ENCODE measurements at regions of chr2 and their contacts with region 1.

Region 1: DNA sequence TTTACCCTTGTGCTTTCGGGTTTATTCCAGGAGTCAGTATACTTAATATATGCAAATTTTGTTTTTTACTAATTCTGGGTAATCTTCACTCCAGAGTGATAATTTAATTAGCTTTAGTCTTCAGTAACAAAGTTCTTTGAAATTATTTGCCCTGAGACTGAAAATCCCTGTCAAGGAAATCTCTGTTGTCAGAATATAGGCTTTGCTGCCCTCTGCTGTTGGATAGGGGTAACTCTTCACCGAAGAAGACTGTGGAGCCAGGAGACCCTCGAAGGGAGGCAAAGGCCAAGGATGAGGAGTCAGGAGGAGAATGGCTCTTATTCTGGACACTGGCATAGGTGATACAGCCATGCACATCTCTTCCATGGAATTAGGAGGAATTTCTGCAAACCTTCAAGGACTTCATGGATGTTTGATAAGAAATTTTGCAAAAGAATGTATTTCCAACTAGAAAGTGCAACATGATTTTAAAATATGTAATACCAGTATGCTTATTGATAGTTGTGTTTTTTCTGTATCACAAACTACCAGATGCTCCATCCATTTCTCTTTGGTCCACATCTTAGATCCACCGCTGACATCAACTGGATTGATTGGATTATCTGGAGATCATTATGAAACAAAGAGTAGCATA is 182.3 kb downstream of the RDH14 start:
- DNase-seq: peak in 2 of 3 donors; percentile 5 to 7
- H3K4me3 ChIP-seq: no peak overlapping the region
- H3K4me3 Mint-ChIP-seq: no peak overlapping the region
- H3K27ac ChIP-seq: no peak overlapping the region
- H3K27ac Mint-ChIP-seq: no peak overlapping the region
- H3K4me1 ChIP-seq: no peaks in the 10 kb centered on the region
- H3K4me1 Mint-ChIP-seq: no peaks in the 10 kb centered on the region
- H3K27me3 ChIP-seq: peaks cover 0 to 2% of the 10 kb centered on the region in 2 donors
- H3K27me3 Mint-ChIP-seq: peaks cover 4 to 8% (median 6%) of the 10 kb centered on the region in 3 donors
- CTCF ChIP-seq: peak; percentile 75

Region 2: DNA sequence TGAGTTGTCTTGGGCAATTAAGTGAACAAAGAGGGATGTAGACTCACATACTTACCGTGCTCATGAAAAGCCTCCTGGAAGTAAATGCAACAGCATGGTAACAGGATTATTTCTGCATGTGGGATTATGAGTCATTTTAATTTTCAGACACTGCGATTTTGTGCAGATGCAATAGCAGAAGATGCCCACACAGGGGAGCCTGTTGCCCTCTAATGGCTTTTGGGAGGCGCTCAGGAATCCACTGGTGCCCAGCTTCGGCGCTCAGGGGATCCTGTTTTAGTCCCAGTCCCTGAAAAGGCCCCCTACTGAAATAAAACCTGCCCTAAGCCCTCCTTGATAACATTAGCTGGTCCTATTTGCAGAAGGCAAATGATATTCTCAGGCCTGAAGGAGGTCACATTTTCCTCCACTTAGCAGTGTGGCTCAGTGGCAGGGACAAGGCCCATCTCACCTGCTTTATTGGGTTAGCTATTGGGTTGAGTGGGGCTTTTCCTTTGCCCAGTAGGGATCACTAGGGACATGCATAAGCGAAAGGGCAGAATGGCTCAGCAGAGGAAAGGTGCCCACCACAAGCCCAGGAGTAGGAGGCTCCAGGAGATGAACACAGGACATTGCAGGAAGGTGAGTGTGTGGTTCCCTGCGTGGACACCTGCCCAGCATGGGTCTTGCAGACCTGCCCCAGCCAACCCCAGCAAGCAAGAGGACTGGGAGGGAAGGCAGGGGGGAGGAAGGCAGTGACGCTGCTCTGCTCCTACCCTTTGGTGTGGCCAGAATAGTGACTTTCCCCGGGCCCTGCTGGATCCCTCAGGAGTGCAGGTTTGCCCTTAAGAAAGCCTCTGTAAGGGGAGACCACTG is 526.2 kb before region 1 on chr2:
- intact Hi-C with region 1: loop called in 1 of 2 experiments (anchors 5 kb)
- DNase-seq: peak; percentile 1 to 12 (median 8)
- H3K4me3 ChIP-seq: no peak overlapping the region
- H3K4me3 Mint-ChIP-seq: no peak overlapping the region
- H3K27ac ChIP-seq: no peak overlapping the region
- H3K27ac Mint-ChIP-seq: no peak overlapping the region
- H3K4me1 ChIP-seq: no peaks in the 10 kb centered on the region
- H3K4me1 Mint-ChIP-seq: no peaks in the 10 kb centered on the region
- H3K27me3 ChIP-seq: peaks cover 0 to under 1% of the 10 kb centered on the region in 2 donors
- H3K27me3 Mint-ChIP-seq: peaks cover 0 to 13% (median 4%) of the 10 kb centered on the region in 3 donors
- CTCF ChIP-seq: peak; percentile 64

Measured in CD14-positive monocyte (primary cell).